ENCODE measurements at regions of chr16 and their contacts with region 1.

Region 1: DNA sequence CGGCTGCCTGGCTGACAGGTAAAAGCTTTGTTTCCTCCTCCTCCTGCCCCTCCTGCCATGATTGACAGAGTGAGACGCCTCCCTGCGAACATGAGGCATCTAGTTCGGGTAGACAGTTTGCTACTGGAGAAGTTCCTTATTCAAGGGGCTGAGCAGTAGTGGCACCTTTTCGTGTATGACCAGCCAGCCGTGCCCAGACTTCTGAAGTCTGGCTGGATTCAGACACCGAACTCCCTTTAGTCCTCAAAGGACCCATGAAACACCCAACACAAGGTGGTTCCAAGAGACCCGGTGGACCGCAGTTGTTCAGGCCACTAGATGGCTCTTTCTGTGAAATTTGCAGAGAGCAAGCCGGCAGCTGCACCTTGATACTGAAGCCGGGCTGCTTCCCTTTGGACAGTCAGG is 192.8 kb downstream of the XYLT1 start:
- DNase-seq: peak; percentile 62
- ATAC-seq: peak; percentile 83
- H3K4me3 Mint-ChIP-seq: no peak overlapping the region
- H3K27ac Mint-ChIP-seq: no peak overlapping the region
- H3K4me1 Mint-ChIP-seq: peaks cover 27% of the 10 kb centered on the region
- H3K27me3 Mint-ChIP-seq: no peaks in the 10 kb centered on the region
- CTCF ChIP-seq: no peak

Region 2: DNA sequence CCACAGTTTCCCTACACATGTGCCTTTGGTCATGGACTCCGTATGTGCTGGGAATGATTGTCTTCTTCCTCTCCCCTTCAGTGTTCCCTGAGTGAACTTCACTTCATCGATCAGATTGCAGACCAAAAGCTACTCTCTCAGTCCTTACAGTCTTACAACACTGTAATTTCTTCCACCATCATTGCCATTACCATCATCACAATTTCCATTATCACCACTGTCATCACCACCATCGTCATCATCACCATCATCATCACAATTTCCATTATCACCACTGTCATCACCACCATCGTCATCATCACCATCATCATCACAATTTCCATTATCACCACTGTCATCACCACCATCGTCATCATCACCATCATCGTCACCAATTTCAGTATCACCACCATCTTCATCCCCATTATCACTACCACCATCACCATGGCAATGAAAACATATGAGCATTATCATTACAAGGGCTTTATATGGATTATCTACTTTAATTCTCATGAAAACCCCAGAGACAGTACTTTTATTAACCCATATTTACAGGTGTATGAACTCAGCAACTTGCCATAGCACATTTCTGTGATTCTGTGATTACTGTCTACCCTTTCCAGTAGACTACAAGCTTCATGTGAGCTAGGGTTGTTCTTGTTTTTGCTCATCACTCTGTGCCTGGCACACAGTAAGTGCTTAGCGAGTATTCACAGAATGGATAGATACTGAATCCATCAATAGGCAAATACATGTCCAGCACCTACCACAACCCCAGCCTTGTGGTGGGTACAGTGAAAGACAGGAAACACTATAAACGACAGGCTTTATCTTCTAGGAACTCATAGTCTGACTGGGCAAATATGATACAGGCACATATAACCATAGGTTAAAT is 134.2 kb before region 1 on chr16:
- CTCF ChIA-PET with region 1: no interaction called
- POLR2A ChIA-PET with region 1: no interaction called
- DNase-seq: no peak
- ATAC-seq: no peak
- H3K4me3 Mint-ChIP-seq: no peak overlapping the region
- H3K27ac Mint-ChIP-seq: no peak overlapping the region
- H3K4me1 Mint-ChIP-seq: no peaks in the 10 kb centered on the region
- H3K27me3 Mint-ChIP-seq: no peaks in the 10 kb centered on the region
- CTCF ChIP-seq: no peak

Region 3: GRCh38 chr16:17386229-17386628 is 108.2 kb after region 1 on chr16:
- CTCF ChIA-PET with region 1: interaction called, 11 read pairs
- POLR2A ChIA-PET with region 1: no interaction called
- DNase-seq: no peak
- ATAC-seq: no peak; the same call in 1 of the 2 replicates
- H3K4me3 Mint-ChIP-seq: peak overlapping the region; percentile 4
- H3K27ac Mint-ChIP-seq: peak overlapping the region; percentile 35; the same call in 1 of the 2 replicates
- H3K4me1 Mint-ChIP-seq: peaks cover 89% of the 10 kb centered on the region
- H3K27me3 Mint-ChIP-seq: no peaks in the 10 kb centered on the region
- CTCF ChIP-seq: no peak

Region 4: GRCh38 chr16:17433577-17434451 is 155.8 kb after region 1 on chr16:
- CTCF ChIA-PET with region 1: no interaction called
- POLR2A ChIA-PET with region 1: no interaction called
- DNase-seq: no peak
- ATAC-seq: peak; percentile 66
- H3K4me3 Mint-ChIP-seq: no peak overlapping the region
- H3K27ac Mint-ChIP-seq: peak overlapping the region; percentile 31; the same call in 1 of the 2 replicates
- H3K4me1 Mint-ChIP-seq: peaks cover 58% of the 10 kb centered on the region
- H3K27me3 Mint-ChIP-seq: no peaks in the 10 kb centered on the region
- CTCF ChIP-seq: no peak

Measured in WTC11 (cell line).